GM12878 (cell line): ENCODE measurements at regions of chr19 and their contacts with region 1.

Region 1: DNA sequence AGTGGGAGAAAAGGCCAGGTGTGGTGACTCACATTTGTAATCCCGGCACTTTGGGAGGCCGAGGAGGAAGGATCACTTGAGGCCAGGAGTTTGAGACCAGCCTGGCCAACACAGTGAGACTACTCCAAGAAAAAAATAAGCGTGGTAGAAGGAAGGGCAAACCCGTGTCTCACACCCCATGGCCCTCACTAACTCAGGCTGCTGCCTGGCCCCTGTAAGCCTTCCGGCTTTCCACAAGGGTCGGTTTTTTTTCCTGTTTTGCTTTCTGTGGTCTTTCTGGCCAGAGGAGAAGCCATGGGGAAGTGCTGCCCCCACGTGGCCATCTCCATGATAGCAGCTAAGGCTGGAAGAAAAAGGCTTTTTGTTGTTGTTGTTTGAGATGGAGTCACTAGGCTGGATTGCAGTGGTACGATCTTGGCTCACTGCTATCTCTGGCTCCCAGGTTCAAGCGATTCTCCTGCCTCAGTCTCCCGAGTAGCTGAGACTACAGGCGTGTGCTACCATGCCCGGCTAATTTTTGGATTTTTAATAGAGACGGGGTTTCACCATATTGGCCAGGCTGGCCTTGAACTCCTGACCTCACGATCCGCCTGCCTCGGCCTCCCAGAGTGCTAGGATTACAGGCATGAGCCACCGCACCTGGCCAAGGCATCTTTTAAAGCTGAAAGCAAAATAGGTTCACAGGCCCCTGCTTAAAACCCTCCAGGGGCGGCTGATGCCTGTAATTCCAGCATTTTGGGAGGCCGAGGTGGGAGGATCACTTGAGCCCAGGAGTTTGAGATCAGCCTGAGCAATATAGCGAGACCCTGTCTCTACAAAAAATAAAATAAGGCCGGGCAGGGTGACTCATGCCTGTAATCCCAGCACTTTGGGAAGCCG is 7.5 kb upstream of the ARHGEF18 start:
- DNase-seq: peak; percentile 92
- ATAC-seq: peak; percentile 17
- H3K4me3 ChIP-seq: 0 out of 2 replicates have a peak overlapping the region, but pooled peaks have one; percentile 1
- H3K27ac ChIP-seq: peak overlapping the region; percentile 80
- H3K4me1 ChIP-seq: peaks cover 67% of the 10 kb centered on the region
- H3K27me3 ChIP-seq: no peaks in the 10 kb centered on the region
- CTCF ChIP-seq: peak; percentile 91 to 96 (median 95)
- EP300 ChIP-seq: peak in 1 of 2 experiments; percentile 36; a peak in 1 of 4 replicates
- POLR2A ChIP-seq: no peak
- RAD21 ChIP-seq: peak; percentile 100

Region 2: GRCh38 chr19:7104747-7105447 is 236.3 kb before region 1 on chr19:
- CTCF ChIA-PET with region 1: interaction called, 62 read pairs
- POLR2A ChIA-PET with region 1: interaction called, 7 read pairs
- RAD21 ChIA-PET with region 1: interaction called, 22 read pairs
- SMC1A ChIA-PET with region 1: interaction called, 41 read pairs
- in situ Hi-C with region 1: loop called (anchors 5 kb)
- intact Hi-C with region 1: loop called (anchors 1 kb)
- DNase-seq: peak; percentile 40
- ATAC-seq: peak; percentile 56
- H3K4me3 ChIP-seq: no peak overlapping the region
- H3K27ac ChIP-seq: no peak overlapping the region
- H3K4me1 ChIP-seq: peaks cover 11% of the 10 kb centered on the region
- H3K27me3 ChIP-seq: no peaks in the 10 kb centered on the region
- CTCF ChIP-seq: no peak
- EP300 ChIP-seq: no peak
- POLR2A ChIP-seq: no peak
- RAD21 ChIP-seq: 0 out of 2 replicates have a peak, but pooled peaks have one; percentile 5

Region 3: GRCh38 chr19:7177926-7178325 is 163.3 kb before region 1 on chr19:
- CTCF ChIA-PET with region 1: interaction called, 4 read pairs
- POLR2A ChIA-PET with region 1: interaction called, 21 read pairs
- RAD21 ChIA-PET with region 1: interaction called, 17 read pairs
- SMC1A ChIA-PET with region 1: interaction called, 13 read pairs
- in situ Hi-C with region 1: no loop called
- intact Hi-C with region 1: loop called (anchors 1 kb)
- DNase-seq: no peak
- ATAC-seq: no peak
- H3K4me3 ChIP-seq: no peak overlapping the region
- H3K27ac ChIP-seq: no peak overlapping the region
- H3K4me1 ChIP-seq: peaks cover 41% of the 10 kb centered on the region
- H3K27me3 ChIP-seq: no peaks in the 10 kb centered on the region
- CTCF ChIP-seq: no peak
- EP300 ChIP-seq: no peak
- POLR2A ChIP-seq: no peak
- RAD21 ChIP-seq: no peak

Region 4: DNA sequence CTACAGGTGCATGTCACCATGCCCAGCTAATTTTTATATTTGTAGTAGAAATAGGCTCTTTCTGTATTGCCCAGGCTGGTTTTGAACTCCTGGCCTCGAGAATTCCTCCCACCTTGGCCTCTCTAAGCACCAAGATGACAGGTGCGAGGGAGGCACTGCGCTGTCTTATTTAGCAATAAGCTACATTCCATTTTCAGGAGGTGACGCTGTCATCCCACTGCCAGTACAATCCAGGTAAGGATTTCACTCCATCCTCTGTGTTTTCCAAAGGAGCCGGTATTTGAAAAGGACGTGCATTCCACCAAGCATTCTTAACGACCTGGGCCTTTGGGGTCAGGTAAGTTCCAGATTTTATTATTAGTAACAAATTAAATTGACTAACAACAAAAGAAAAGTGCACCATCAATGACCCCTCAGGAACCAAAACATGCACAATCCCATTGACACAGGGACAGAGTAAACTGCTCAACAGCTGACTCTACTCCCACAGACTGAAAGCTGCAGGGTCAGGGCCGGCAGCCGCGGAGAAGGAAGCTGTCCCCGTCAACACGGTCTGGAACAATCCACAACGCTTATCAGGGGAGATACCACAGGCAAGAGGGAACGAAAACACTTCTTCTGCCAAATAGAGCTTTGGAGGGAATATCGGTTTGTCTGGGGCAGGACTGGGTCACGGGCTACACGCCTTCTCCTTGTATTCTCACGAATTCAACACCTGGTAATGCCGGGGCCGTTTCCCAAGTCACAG is 129.8 kb before region 1 on chr19:
- CTCF ChIA-PET with region 1: interaction called, 3 read pairs
- POLR2A ChIA-PET with region 1: interaction called, 4 read pairs
- RAD21 ChIA-PET with region 1: interaction called, 5 read pairs
- SMC1A ChIA-PET with region 1: interaction called, 10 read pairs
- in situ Hi-C with region 1: no loop called
- intact Hi-C with region 1: no loop called
- DNase-seq: no peak
- ATAC-seq: no peak
- H3K4me3 ChIP-seq: no peak overlapping the region
- H3K27ac ChIP-seq: no peak overlapping the region
- H3K4me1 ChIP-seq: peaks cover 55% of the 10 kb centered on the region
- H3K27me3 ChIP-seq: no peaks in the 10 kb centered on the region
- CTCF ChIP-seq: no peak
- EP300 ChIP-seq: no peak
- POLR2A ChIP-seq: no peak
- RAD21 ChIP-seq: no peak

Region 5: DNA sequence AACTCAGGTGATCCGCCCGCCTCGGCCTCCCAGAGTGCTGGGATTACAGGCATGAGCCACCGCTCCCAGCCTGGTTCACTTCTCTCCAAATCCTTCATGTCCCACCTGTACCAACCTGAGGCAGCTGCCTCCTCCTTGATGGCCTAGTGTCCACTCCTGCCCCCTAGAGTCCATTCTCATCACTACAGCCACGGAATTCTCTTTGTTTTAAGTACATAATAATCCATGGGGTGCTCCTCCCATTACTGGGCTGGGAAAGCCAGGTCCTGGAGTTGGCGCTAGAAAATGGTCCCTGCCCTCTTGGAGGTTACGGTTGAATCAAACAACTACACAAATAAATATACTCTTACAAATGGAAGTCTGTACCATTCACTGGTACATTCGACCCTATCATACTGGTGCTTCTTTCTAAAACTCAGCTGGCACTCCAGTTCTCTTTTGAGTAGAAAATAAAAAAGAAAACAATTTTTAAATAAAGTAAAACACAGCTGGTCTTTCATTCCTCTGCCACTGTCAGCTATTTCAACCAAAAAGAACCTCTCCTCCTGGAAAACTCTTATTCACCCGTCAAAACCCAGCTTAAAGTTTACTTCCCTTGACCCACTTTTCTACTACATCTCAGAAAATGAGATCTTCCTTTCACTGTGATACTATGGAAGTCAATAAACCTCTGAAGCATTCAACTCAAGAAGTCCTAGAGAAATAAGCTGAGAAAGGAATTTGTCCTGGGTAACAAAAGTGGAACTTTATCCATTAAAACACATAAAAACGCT is 14.9 kb before region 1 on chr19:
- CTCF ChIA-PET with region 1: interaction called, 154 read pairs
- POLR2A ChIA-PET with region 1: interaction called, 28 read pairs
- RAD21 ChIA-PET with region 1: interaction called, 104 read pairs
- SMC1A ChIA-PET with region 1: interaction called, 120 read pairs
- in situ Hi-C with region 1: no loop called
- intact Hi-C with region 1: loop called (anchors 1 kb)
- DNase-seq: no peak
- ATAC-seq: peak; percentile 52; the same call in 2 of the 3 replicates
- H3K4me3 ChIP-seq: no peak overlapping the region
- H3K27ac ChIP-seq: no peak overlapping the region
- H3K4me1 ChIP-seq: no peaks in the 10 kb centered on the region
- H3K27me3 ChIP-seq: no peaks in the 10 kb centered on the region
- CTCF ChIP-seq: peak; percentile 41 to 51 (median 42); a peak in 5 of 6 replicates
- EP300 ChIP-seq: no peak
- POLR2A ChIP-seq: no peak
- RAD21 ChIP-seq: peak; percentile 65

Region 6: DNA sequence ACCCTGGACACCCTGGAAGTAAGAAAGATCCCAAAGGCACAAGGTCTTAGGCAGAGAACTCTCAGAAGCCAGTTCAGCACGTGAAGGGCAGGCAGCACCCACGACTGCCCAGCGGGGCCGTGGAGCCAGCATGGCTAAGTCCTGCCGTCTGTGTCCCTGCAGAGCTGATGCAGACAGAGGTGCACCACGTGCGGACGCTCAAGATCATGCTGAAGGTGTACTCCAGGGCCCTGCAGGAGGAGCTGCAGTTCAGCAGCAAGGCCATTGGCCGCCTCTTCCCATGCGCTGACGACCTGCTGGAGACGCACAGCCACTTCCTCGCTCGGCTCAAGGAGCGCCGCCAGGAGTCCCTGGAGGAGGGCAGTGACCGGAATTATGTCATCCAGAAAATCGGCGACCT is 102.8 kb after region 1 on chr19:
- CTCF ChIA-PET with region 1: no interaction called
- POLR2A ChIA-PET with region 1: no interaction called
- RAD21 ChIA-PET with region 1: no interaction called
- SMC1A ChIA-PET with region 1: no interaction called
- in situ Hi-C with region 1: no loop called
- intact Hi-C with region 1: no loop called
- DNase-seq: no peak
- ATAC-seq: no peak
- H3K4me3 ChIP-seq: no peak overlapping the region
- H3K27ac ChIP-seq: no peak overlapping the region
- H3K4me1 ChIP-seq: no peaks in the 10 kb centered on the region
- H3K27me3 ChIP-seq: no peaks in the 10 kb centered on the region
- CTCF ChIP-seq: no peak
- EP300 ChIP-seq: no peak
- POLR2A ChIP-seq: no peak
- RAD21 ChIP-seq: no peak